ENCODE measurements at regions of chr14 and their contacts with region 1.

Region 1: DNA sequence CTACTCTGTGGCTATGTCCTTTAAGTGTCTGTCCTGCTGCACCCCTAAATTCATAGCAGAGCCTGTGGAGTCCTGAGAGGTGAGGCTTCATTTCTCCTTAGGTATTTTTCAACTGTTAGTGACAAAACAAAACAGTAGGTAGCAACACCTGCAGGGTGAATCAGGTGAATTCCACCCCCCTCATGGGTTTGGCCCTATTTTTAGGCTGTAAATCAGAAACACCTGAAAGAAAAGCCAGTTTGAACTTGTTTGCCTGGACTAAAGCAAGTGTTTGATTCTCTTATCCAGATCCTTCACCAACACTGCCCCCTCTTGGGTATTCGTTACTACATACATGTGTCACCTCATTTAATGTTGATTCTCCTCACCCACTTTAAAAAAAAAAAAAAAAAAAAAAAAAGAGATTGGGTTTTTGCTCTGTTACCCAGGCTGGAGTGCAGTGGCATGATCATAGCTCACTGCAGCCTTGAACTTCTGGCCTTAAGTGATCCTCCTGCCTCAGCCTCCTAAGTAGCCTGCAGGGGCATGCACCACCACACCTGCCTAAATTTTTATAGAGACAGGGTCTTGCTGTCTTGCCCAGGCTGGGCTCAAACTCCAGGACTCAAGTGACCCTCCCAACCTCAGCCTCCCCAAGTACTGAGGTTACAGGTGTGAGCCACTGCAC is 10.3 kb downstream of the TBPL2 start:
- DNase-seq: peak in 32 of 35 experiments; percentile 7 to 82 (median 36)
- ATAC-seq: peak; percentile 84 to 94 (median 87)
- H3K4me3 ChIP-seq: no peak overlapping the region
- H3K4me3 Mint-ChIP-seq: no peak overlapping the region
- H3K27ac ChIP-seq: peak overlapping the region; percentile 61
- H3K27ac Mint-ChIP-seq: peak overlapping the region; percentile 90 to 91
- H3K4me1 ChIP-seq: peaks cover 20 to 24% of the 10 kb centered on the region in 2 experiments
- H3K4me1 Mint-ChIP-seq: peaks cover 34 to 41% (median 34%) of the 10 kb centered on the region in 3 donors
- H3K27me3 ChIP-seq: no peaks in the 10 kb centered on the region
- H3K27me3 Mint-ChIP-seq: no peaks in the 10 kb centered on the region

Region 2: GRCh38 chr14:55038708-55039107 is 391.4 kb before region 1 on chr14:
- CTCF ChIA-PET with region 1: no interaction called
- POLR2A ChIA-PET with region 1: no interaction called
- DNase-seq: no peak
- ATAC-seq: no peak
- H3K4me3 ChIP-seq: no peak overlapping the region
- H3K4me3 Mint-ChIP-seq: no peak overlapping the region
- H3K27ac ChIP-seq: no peak overlapping the region
- H3K27ac Mint-ChIP-seq: peak overlapping the region; percentile 4 to 12
- H3K4me1 ChIP-seq: no peaks in the 10 kb centered on the region
- H3K4me1 Mint-ChIP-seq: peaks cover 4 to 6% (median 5%) of the 10 kb centered on the region in 3 donors
- H3K27me3 ChIP-seq: no peaks in the 10 kb centered on the region
- H3K27me3 Mint-ChIP-seq: no peaks in the 10 kb centered on the region

Region 3: DNA sequence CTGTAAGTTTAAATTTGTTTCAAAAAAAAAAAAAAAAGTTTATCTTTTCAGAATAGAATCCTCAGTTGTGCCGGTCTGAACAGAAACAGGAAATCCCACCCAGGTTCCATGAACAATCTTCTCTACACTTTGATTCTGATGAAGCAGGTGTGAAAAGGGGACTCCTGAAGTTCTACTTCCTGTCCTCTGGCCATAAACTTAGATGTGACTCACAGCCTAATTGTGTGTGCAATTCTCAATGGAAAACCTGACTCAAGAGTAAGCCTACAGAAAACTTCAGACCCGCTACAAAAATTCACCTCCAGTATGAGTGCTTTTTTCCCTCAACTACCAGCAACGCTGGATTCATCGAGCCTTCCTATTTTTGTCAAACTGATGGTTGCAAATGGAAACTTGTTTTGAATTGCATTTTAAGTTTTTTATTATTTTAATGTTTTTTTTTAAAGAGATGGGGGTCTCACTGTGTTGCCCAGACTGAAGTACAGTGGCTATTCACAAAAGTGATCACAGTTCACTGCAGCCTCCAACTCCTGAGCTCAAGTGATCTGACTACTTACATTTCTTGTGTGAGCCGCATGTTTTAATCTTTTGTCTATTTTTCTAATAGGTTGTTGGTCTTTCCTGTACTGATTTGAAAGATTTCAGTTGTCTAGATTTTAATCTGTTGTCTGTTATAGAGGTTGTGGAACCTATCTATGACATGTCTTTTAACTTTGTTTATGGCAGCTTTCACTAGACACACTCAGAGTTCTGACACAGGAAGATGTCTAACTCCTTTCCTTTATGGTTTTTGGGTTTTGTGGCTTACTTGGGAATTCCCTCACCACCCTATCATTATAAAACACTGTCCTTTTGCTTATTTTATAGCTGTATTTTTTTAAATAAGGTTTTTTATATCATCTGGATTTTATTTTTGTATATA is 56.1 kb before region 1 on chr14:
- CTCF ChIA-PET with region 1: interaction called in 1 of 2 experiments, 10 read pairs
- POLR2A ChIA-PET with region 1: no interaction called
- DNase-seq: peak in 4 of 35 experiments; percentile 11 to 82 (median 28)
- ATAC-seq: peak; percentile 70 to 92 (median 78)
- H3K4me3 ChIP-seq: no peak overlapping the region
- H3K4me3 Mint-ChIP-seq: peak overlapping the region; percentile 35 to 73 (median 46)
- H3K27ac ChIP-seq: peak overlapping the region; percentile 80
- H3K27ac Mint-ChIP-seq: peak overlapping the region; percentile 90 to 95
- H3K4me1 ChIP-seq: peaks cover 14 to 19% of the 10 kb centered on the region in 2 experiments
- H3K4me1 Mint-ChIP-seq: peaks cover 31 to 46% (median 36%) of the 10 kb centered on the region in 3 donors
- H3K27me3 ChIP-seq: no peaks in the 10 kb centered on the region
- H3K27me3 Mint-ChIP-seq: no peaks in the 10 kb centered on the region

Region 4: GRCh38 chr14:55414558-55414957 is 15.6 kb before region 1 on chr14:
- CTCF ChIA-PET with region 1: interaction called, 4 to 10 read pairs
- POLR2A ChIA-PET with region 1: interaction called, 3 to 4 read pairs
- DNase-seq: no peak
- ATAC-seq: no peak
- H3K4me3 ChIP-seq: no peak overlapping the region
- H3K4me3 Mint-ChIP-seq: no peak overlapping the region
- H3K27ac ChIP-seq: no peak overlapping the region
- H3K27ac Mint-ChIP-seq: no peak overlapping the region
- H3K4me1 ChIP-seq: peaks cover 7 to 20% of the 10 kb centered on the region in 2 experiments
- H3K4me1 Mint-ChIP-seq: peaks cover 23 to 30% (median 23%) of the 10 kb centered on the region in 3 donors
- H3K27me3 ChIP-seq: no peaks in the 10 kb centered on the region
- H3K27me3 Mint-ChIP-seq: no peaks in the 10 kb centered on the region

Region 5: DNA sequence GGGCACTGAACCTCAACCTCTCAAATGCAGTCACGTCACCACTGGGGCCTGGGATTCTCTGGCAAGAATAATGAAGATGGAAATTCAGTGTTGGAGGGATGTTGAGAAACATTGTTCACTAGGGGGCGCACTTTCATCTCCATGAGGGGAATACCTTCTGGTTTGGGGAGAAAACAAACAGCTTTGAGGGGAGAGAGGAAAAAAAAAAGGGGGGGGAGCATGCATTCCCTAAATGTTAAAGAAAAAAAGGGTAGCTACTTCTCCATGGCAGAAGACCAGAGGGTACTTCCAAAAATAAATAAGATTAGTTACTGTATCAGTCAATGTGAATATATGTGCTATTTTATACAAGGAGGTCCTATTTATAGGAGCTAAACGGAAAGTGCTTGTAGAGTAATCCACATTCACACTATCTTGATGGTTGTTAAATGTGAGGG is 16.1 kb after region 1 on chr14:
- CTCF ChIA-PET with region 1: interaction called, 6 to 12 read pairs
- POLR2A ChIA-PET with region 1: no interaction called
- DNase-seq: peak in 29 of 35 experiments; percentile 8 to 79 (median 32)
- ATAC-seq: peak in 2 of 4 experiments; percentile 44 to 56
- H3K4me3 ChIP-seq: no peak overlapping the region
- H3K4me3 Mint-ChIP-seq: no peak overlapping the region
- H3K27ac ChIP-seq: no peak overlapping the region
- H3K27ac Mint-ChIP-seq: no peak overlapping the region
- H3K4me1 ChIP-seq: no peaks in the 10 kb centered on the region
- H3K4me1 Mint-ChIP-seq: peaks cover 3 to 6% (median 3%) of the 10 kb centered on the region in 3 donors
- H3K27me3 ChIP-seq: no peaks in the 10 kb centered on the region
- H3K27me3 Mint-ChIP-seq: peaks cover 0 to 2% of the 10 kb centered on the region in 2 donors

Region 6: DNA sequence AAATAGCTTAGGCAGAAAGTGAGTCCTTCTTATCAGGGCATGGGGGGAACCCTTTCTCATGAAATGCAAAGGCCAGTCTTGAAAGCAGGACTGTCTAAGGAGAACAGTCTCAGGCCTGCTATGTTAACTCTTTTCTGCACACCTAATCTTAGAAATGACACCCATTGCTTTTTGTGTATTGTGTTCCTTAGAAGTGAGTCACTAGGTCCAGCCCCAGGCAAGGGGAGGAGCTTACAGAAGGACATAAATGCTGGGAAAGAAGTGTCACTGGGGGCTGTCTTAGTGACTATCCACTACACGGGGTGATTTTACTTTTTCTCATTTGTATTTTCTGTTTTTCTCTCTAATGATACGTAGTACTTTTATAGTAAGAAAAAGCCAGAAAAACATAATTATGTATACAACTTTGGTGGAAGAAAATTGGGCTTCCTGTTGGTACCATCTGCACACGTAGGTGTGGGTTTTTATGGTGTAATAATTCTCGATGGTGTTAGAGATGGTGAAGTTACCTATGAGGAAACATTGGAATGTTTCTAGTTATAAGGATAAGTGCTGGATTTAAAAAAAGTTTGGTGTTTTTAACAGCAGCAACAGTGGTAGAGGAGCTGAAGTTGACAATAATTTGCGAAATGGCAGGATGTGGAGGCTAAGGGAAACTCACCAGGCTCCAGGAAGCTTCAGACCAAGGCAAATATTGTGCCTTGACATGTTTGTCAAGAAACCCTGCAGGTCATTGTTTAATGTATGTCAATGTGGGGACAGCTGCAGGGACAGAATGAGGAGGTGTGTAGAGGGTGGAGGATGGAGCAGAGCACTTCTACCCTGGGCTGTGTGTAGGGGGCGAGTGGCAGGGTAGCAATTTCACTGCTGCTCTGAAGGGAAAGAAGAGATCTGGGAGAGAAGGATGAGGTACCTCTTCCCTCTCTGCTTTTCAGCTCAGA is 364.8 kb after region 1 on chr14:
- CTCF ChIA-PET with region 1: no interaction called
- POLR2A ChIA-PET with region 1: interaction called in 1 of 2 experiments, 12 read pairs
- DNase-seq: no peak
- ATAC-seq: no peak
- H3K4me3 ChIP-seq: no peak overlapping the region
- H3K4me3 Mint-ChIP-seq: no peak overlapping the region
- H3K27ac ChIP-seq: no peak overlapping the region
- H3K27ac Mint-ChIP-seq: no peak overlapping the region
- H3K4me1 ChIP-seq: no peaks in the 10 kb centered on the region
- H3K4me1 Mint-ChIP-seq: no peaks in the 10 kb centered on the region
- H3K27me3 ChIP-seq: no peaks in the 10 kb centered on the region
- H3K27me3 Mint-ChIP-seq: no peaks in the 10 kb centered on the region